Activated naive CD4-positive, alpha-beta T cell treated with anti-CD3 and anti-CD28 coated beads for 36 hours (primary cell): ENCODE measurements at regions of chr1 and their contacts with region 1.

Region 1: DNA sequence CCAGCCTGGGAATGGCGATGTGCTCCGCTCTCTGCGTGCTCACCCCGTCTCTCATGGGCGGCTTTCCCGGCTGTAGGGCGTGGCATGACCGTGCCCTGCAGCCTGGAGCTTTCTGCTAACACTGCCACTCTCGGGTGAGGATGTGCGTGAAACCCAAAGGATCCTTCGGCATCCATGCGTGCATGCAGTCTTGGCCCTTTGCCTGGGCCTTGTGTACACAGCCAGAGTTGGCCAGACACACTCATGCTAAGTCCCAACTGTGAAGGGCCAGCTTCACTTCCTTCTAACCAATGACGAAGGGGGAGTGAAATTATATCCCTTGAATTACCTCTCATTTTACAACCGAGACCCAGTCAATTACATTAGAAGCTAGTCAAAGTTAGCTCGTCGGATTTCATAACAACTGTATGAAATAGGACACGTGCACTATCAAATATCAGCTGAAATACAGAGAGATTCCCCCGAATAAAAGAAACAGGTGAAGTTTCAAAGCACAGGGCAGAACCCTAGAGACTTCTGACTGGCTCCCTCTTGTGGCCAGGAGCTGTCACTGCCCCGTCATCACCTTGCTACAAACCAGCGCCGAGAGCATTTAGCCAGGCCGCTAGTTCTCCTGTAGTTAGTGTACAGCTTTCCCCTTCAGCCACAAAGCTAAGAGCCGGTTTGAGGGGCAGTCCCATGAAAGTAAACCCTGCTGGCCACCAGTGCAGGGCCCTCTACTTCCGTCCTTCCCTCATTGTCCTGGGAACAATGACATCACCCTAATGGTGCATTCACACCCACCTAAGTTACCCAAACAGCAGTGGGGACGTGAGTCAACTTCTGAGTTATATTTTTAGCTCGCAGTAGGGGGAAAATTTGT is 63.4 kb upstream of the COA6 start:
- DNase-seq: peak; percentile 87
- H3K4me3 Mint-ChIP-seq: no peak overlapping the region
- H3K27ac Mint-ChIP-seq: no peak overlapping the region
- H3K4me1 Mint-ChIP-seq: peaks cover 6% of the 10 kb centered on the region
- H3K27me3 Mint-ChIP-seq: peaks cover 2% of the 10 kb centered on the region

Region 2: GRCh38 chr1:234114648-234115307 is 195.1 kb before region 1 on chr1:
- CTCF ChIA-PET with region 1: interaction called, 62 read pairs
- intact Hi-C with region 1: loop called (anchors 1 kb)
- DNase-seq: peak; percentile 43
- H3K4me3 Mint-ChIP-seq: peak overlapping the region; percentile 41
- H3K27ac Mint-ChIP-seq: no peak overlapping the region
- H3K4me1 Mint-ChIP-seq: peaks cover 6% of the 10 kb centered on the region
- H3K27me3 Mint-ChIP-seq: peaks cover 27% of the 10 kb centered on the region

Region 3: GRCh38 chr1:234170622-234171021 is 139.2 kb before region 1 on chr1:
- CTCF ChIA-PET with region 1: interaction called, 17 read pairs
- intact Hi-C with region 1: no loop called
- DNase-seq: peak; percentile 65
- H3K4me3 Mint-ChIP-seq: no peak overlapping the region
- H3K27ac Mint-ChIP-seq: peak overlapping the region; percentile 60
- H3K4me1 Mint-ChIP-seq: peaks cover 15% of the 10 kb centered on the region
- H3K27me3 Mint-ChIP-seq: no peaks in the 10 kb centered on the region

Region 4: DNA sequence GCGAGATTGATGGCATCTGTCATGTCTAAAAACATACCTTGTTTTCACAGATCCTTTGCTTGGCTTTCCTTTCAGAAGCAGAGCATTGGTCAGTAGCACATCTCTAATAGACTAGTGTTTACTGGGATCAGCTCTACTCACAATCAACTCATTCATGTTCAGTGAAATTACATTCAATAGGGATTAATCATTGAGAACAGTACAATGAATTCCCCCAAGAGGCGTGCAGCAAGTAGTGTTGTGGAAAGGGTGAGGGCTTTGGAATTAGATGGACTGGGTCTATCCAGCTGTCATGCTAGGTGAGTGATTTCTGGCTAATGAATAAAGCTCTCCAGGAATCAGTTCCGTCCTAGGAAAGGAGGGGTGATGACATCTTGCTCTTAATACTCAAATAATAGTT is 91.8 kb before region 1 on chr1:
- CTCF ChIA-PET with region 1: interaction called, 155 read pairs
- intact Hi-C with region 1: no loop called
- DNase-seq: no peak
- H3K4me3 Mint-ChIP-seq: no peak overlapping the region
- H3K27ac Mint-ChIP-seq: no peak overlapping the region
- H3K4me1 Mint-ChIP-seq: peaks cover 9% of the 10 kb centered on the region
- H3K27me3 Mint-ChIP-seq: peaks cover 32% of the 10 kb centered on the region

Region 5: GRCh38 chr1:234260578-234260977 is 49.3 kb before region 1 on chr1:
- CTCF ChIA-PET with region 1: interaction called, 15 read pairs
- intact Hi-C with region 1: no loop called
- DNase-seq: peak; percentile 69
- H3K4me3 Mint-ChIP-seq: no peak overlapping the region
- H3K27ac Mint-ChIP-seq: no peak overlapping the region
- H3K4me1 Mint-ChIP-seq: peaks cover 13% of the 10 kb centered on the region
- H3K27me3 Mint-ChIP-seq: peaks cover 36% of the 10 kb centered on the region

Region 6: GRCh38 chr1:234342774-234343173 is 32.9 kb after region 1 on chr1:
- CTCF ChIA-PET with region 1: interaction called, 10 read pairs
- intact Hi-C with region 1: no loop called
- DNase-seq: no peak
- H3K4me3 Mint-ChIP-seq: no peak overlapping the region
- H3K27ac Mint-ChIP-seq: no peak overlapping the region
- H3K4me1 Mint-ChIP-seq: no peaks in the 10 kb centered on the region
- H3K27me3 Mint-ChIP-seq: no peaks in the 10 kb centered on the region